Dorsolateral prefrontal cortex (tissue), 120 donors: ENCODE measurements at regions of chr9 and their contacts with region 1.

Region 1: GRCh38 chr9:96667361-96667728 is 12.2 kb upstream of the PRXL2C start:
- DNase-seq: no peak
- H3K4me3 ChIP-seq: no peak overlapping the region
- H3K27ac ChIP-seq: no peak overlapping the region
- H3K27me3 ChIP-seq: no peaks in the 10 kb centered on the region
- CTCF ChIP-seq: no peak

Region 2: DNA sequence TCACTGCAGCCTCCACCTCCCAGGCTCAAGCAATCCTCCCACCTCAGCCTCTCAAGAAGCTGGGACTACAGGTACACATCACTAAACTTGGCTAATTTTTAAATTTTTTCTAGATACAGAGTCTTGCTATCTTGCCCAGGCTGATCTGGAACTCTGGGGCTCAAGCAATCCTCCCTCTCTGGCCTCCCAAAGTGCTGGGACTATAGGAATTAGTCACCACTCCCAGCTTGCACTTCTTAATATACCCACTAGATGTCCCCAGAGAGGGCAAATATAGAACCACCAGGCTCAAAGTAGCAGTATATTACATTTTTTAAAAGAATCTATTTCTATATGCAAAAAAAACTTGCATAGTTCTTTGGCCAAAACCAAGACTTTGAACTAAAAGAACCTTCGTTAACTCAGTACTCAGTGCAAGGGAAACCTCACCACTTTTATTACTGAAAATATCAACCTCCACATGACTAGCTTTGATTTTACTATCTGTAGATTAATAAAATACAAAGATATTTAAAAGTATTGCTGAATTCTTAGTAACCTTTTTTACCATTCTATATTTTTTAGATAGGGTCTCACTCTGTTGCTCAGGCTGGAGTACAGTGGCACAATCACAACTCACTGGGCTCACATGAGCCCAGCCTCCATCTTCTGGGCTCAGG is 339.5 kb before region 1 on chr9:
- intact Hi-C with region 1: loop called in 1 of 2 experiments (anchors 5 kb)
- DNase-seq: peak in 3 of 10 donors; percentile 17 to 49 (median 42)
- H3K4me3 ChIP-seq: peak overlapping the region in 1 of 59 donors; percentile 13
- H3K27ac ChIP-seq: peak overlapping the region in 33 of 59 donors; percentile 1 to 70 (median 40)
- H3K27me3 ChIP-seq: no peaks in the 10 kb centered on the region
- CTCF ChIP-seq: peak; percentile 73 to 97 (median 90)